Panc1 (cell line): ENCODE measurements at regions of chr11 and their contacts with region 1.

Region 1: GRCh38 chr11:44949160-44950030 is 1.3 kb downstream of the TP53I11 start:
- DNase-seq: no peak
- ATAC-seq: peak; percentile 73
- H3K4me3 ChIP-seq: peak overlapping the region; percentile 75 to 78
- H3K27ac ChIP-seq: peak overlapping the region; percentile 72
- H3K4me1 ChIP-seq: peaks cover 48% of the 10 kb centered on the region
- H3K27me3 ChIP-seq: no peaks in the 10 kb centered on the region
- CTCF ChIP-seq: peak; percentile 85

Region 2: GRCh38 chr11:45017329-45017728 is 67.9 kb after region 1 on chr11:
- CTCF ChIA-PET with region 1: no interaction called
- POLR2A ChIA-PET with region 1: no interaction called
- in situ Hi-C with region 1: no loop called
- intact Hi-C with region 1: loop called (anchors 10 kb)
- DNase-seq: no peak
- ATAC-seq: no peak
- H3K4me3 ChIP-seq: no peak overlapping the region
- H3K27ac ChIP-seq: no peak overlapping the region
- H3K4me1 ChIP-seq: no peaks in the 10 kb centered on the region
- H3K27me3 ChIP-seq: no peaks in the 10 kb centered on the region
- CTCF ChIP-seq: no peak; the same call in 1 of the 2 replicates

Region 3: GRCh38 chr11:45332276-45332934 is 383.0 kb after region 1 on chr11:
- CTCF ChIA-PET with region 1: no interaction called
- POLR2A ChIA-PET with region 1: no interaction called
- in situ Hi-C with region 1: no loop called
- intact Hi-C with region 1: no loop called
- DNase-seq: peak; percentile 32
- ATAC-seq: peak; percentile 86
- H3K4me3 ChIP-seq: no peak overlapping the region
- H3K27ac ChIP-seq: no peak overlapping the region
- H3K4me1 ChIP-seq: peaks cover 3% of the 10 kb centered on the region; the same call in 1 of the 2 replicates
- H3K27me3 ChIP-seq: peaks cover 20% of the 10 kb centered on the region
- CTCF ChIP-seq: peak; percentile 86